ENCODE measurements at regions of chr12 and their contacts with region 1.

Region 1: DNA sequence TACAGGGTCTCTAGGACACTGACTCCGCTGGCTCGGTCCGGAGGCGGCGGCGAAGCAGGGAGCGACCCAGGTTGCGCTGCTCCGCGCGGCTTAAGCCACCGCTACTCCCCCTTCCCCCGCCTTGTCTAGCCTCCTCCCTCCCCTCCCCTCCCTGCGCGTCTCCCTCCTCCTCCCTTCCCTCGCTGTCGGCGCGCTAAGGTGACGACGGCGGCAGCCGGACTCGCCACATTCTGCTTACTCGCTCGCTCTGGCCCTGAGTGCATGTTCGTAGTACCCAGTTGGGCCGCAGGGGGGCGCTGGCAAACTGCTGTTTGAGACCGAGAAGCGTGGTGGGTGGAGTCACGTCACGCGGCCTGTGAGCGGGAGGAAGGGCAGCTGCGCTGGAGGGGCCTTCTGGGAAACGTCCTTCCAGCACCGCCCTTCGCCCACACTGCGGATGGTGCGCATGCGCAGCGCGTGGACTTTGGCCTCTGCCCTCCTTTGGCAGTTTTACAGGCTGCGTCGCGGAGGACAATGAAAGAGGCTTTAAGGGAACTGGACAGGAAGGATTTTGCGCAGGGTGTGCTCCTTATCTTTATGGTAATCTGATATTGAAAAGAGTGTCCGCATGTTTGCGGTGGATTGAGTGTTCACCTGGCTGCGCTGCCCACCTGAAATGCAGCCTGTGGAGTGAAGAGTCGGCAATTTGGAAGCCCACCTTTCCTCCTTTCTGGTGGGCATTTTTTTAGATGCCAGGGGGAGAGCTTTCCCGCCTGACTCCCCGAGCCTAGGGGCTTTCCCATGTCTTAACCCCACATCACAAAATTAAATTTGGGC is at the start of gene SCAF11:
- DNase-seq: peak; percentile 96 to 100 (median 96)
- ATAC-seq: peak; percentile 80
- H3K4me3 ChIP-seq: peak within 1 kb of the TSS; percentile 87
- H3K27ac ChIP-seq: peak within 1 kb of the TSS; percentile 97
- H3K4me1 ChIP-seq: peaks cover 8 to 16% of the 10 kb centered on the region in 2 experiments
- H3K27me3 ChIP-seq: no peaks in the 10 kb centered on the region
- CTCF ChIP-seq: peak; percentile 91 to 98 (median 97)
- EP300 ChIP-seq: peak; percentile 62
- POLR2A ChIP-seq: peak; percentile 89
- RAD21 ChIP-seq: peak; percentile 87 to 94
- polyA plus RNA-seq, gene SCAF11: 30.4 to 35.7 TPM

Region 2: GRCh38 chr12:45728630-45729232 is 261.9 kb before region 1 on chr12:
- CTCF ChIA-PET with region 1: no interaction called
- POLR2A ChIA-PET with region 1: no interaction called
- in situ Hi-C with region 1: no loop called
- intact Hi-C with region 1: loop called (anchors 2 kb)
- DNase-seq: peak; percentile 72 to 97 (median 80)
- ATAC-seq: peak; percentile 73
- H3K4me3 ChIP-seq: peak overlapping the region; percentile 71
- H3K27ac ChIP-seq: peak overlapping the region; percentile 95
- H3K4me1 ChIP-seq: peaks cover 4 to 6% of the 10 kb centered on the region in 2 experiments; a peak in 3 of 5 replicates
- H3K27me3 ChIP-seq: no peaks in the 10 kb centered on the region
- CTCF ChIP-seq: peak; percentile 89 to 98 (median 97)
- EP300 ChIP-seq: peak; percentile 72
- POLR2A ChIP-seq: peak; percentile 95
- RAD21 ChIP-seq: peak; percentile 43 to 61

Region 3: GRCh38 chr12:45974171-45974719 is 16.4 kb before region 1 on chr12:
- CTCF ChIA-PET with region 1: no interaction called
- POLR2A ChIA-PET with region 1: interaction called, 10 read pairs
- in situ Hi-C with region 1: no loop called
- intact Hi-C with region 1: no loop called
- DNase-seq: no peak
- ATAC-seq: no peak; the same call in 2 of the 3 replicates
- H3K4me3 ChIP-seq: no peak overlapping the region
- H3K27ac ChIP-seq: no peak overlapping the region
- H3K4me1 ChIP-seq: peaks cover 5 to 13% of the 10 kb centered on the region in 2 experiments; a peak in 4 of 5 replicates
- H3K27me3 ChIP-seq: no peaks in the 10 kb centered on the region
- CTCF ChIP-seq: no peak
- EP300 ChIP-seq: no peak
- POLR2A ChIP-seq: no peak
- RAD21 ChIP-seq: no peak

Region 4: DNA sequence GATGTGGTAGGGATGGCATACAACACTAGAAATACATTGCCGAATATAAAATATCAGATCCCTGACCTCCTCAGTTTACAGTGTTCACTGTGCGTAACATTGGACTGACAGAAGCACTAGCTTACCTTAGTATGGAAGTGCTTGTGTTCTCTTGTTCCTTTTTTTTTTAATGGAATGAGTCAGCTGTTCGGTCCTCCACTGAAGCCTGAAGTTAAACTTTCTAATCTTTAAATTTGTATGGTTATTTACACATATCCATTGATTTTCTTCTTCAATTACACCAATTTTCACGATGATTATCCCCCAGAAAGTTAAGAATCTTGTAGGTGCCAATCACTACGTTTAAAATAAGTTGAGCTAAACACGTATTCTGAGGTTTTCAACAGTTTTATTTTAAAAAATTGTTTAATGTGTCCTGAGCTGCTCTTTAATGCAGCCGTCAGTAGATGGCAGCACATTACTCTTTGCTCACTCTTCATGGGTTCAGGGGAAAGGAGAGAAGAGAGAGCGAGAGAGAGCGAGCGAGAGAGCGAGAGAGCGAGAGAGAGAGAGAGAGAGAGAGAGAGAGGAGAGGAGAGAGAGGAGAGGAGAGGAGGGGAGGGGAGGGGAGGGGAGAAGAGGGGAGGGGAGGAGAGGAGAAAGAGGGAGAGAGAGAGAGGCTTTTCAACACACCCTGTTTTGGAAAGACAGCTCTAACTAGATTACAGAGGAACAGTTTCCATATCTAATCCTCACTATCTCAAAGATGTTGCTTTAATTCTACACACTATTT is 134.4 kb after region 1 on chr12:
- CTCF ChIA-PET with region 1: no interaction called
- POLR2A ChIA-PET with region 1: interaction called, 3 read pairs
- in situ Hi-C with region 1: no loop called
- intact Hi-C with region 1: loop called (anchors 10 kb)
- DNase-seq: peak; percentile 35 to 78 (median 50)
- ATAC-seq: peak; percentile 95
- H3K4me3 ChIP-seq: no peak overlapping the region
- H3K27ac ChIP-seq: no peak overlapping the region
- H3K4me1 ChIP-seq: peaks cover 0 to 10% of the 10 kb centered on the region in 2 experiments; a peak in 3 of 5 replicates
- H3K27me3 ChIP-seq: no peaks in the 10 kb centered on the region; a peak in 1 of 5 replicates
- CTCF ChIP-seq: peak; percentile 60 to 83 (median 65)
- EP300 ChIP-seq: no peak
- POLR2A ChIP-seq: no peak
- RAD21 ChIP-seq: peak; percentile 76 to 83

Region 5: DNA sequence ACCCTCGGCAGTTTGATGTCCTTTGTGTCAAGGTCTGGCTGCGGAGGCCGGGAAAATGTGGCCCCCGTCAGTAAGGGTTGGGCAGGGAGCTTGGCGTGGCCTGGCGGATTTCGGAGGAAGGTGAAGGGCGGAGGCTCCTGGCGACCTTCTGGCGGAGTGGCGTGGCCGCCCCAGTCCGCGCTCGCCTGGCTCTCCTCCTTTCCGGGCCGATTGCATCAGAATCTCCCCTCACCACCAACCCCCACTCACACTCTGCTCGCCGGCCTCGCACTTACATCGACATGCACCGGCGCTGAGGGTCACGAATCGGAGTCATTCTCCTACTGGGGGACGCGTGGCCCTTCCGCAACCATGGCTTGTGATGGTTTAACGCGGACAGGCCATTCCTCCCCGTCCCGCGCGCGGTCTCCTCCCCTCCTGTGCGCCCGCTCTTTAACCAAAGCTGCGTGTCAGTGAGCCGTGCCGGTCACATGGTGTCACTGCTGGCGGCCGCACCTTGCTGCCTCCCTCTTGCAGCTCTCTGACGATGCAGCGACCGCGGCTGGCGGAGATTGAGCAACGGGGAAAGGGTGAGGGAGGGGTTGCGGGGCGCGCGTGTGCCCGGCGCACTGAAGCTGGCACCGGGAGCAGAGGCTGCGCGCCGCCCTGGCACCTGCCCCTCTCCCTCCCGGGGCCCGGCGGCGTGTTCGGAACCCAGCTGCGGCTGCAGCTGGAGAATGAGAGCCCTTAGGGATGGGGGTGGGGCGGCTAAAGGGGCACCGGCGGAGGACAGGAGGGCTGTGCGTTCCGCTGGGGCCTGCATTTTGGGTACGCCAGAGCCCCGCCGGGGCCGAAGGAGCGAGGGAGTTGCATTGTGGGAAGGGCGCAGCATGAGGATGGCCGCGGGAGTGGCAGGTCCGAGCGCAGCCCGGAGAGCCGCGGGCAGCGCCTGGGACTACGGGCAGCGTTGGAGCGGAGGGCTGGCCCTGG is 278.2 kb after region 1 on chr12 and contains the start of gene SLC38A1:
- CTCF ChIA-PET with region 1: no interaction called
- POLR2A ChIA-PET with region 1: no interaction called
- in situ Hi-C with region 1: no loop called
- intact Hi-C with region 1: loop called (anchors 5 kb)
- DNase-seq: peak; percentile 78 to 88 (median 80)
- ATAC-seq: peak; percentile 87
- H3K4me3 ChIP-seq: peak within 1 kb of the TSS; percentile 83
- H3K27ac ChIP-seq: peak within 1 kb of the TSS; percentile 96
- H3K4me1 ChIP-seq: peaks cover 19 to 33% of the 10 kb centered on the region in 2 experiments; a peak in 4 of 5 replicates
- H3K27me3 ChIP-seq: no peaks in the 10 kb centered on the region
- CTCF ChIP-seq: 0 out of 6 replicates have a peak, but pooled peaks of 2 of the 3 experiments have one; percentile 12 to 14
- EP300 ChIP-seq: peak; percentile 56
- POLR2A ChIP-seq: peak; percentile 88
- RAD21 ChIP-seq: peak in 1 of 2 experiments; percentile 29
- polyA plus RNA-seq, gene SLC38A1: 51.9 to 75.0 TPM

Region 6: GRCh38 chr12:46372544-46373110 is 382.0 kb after region 1 on chr12 and contains the start of gene SLC38A2:
- CTCF ChIA-PET with region 1: no interaction called
- POLR2A ChIA-PET with region 1: no interaction called
- in situ Hi-C with region 1: no loop called
- intact Hi-C with region 1: loop called (anchors 5 kb)
- DNase-seq: peak; percentile 94 to 97 (median 96)
- ATAC-seq: peak; percentile 90
- H3K4me3 ChIP-seq: peak within 1 kb of the TSS; percentile 74
- H3K27ac ChIP-seq: peak within 1 kb of the TSS; percentile 88
- H3K4me1 ChIP-seq: peaks cover 16 to 45% of the 10 kb centered on the region in 2 experiments
- H3K27me3 ChIP-seq: no peaks in the 10 kb centered on the region
- CTCF ChIP-seq: 0 out of 6 replicates have a peak, but pooled peaks of 1 of the 3 experiments have one; percentile 0
- EP300 ChIP-seq: no peak
- POLR2A ChIP-seq: peak; percentile 99
- RAD21 ChIP-seq: peak in 1 of 2 experiments; percentile 6; a peak in 1 of 4 replicates
- polyA plus RNA-seq, gene SLC38A2: 98.7 to 132 TPM

Region 7: DNA sequence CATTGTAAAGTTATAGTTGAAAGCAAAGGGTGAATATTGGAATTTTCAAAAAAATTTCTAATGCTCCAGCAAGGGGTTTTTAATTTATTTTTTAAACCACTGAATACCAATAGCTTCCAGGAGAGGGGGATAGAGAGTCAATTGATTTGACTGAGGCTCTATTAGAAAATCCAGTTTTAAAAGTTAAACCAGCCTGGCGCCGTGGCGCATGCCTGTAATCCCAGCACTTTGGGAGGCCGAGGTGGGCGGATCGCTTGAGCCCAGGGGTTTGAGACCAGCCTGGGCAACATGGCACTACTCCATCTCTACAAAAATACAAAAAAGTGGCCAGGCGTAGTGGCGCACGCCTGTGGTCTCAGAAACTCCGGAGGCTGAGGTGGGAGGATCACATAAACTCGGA is 685.1 kb after region 1 on chr12:
- CTCF ChIA-PET with region 1: no interaction called
- POLR2A ChIA-PET with region 1: no interaction called
- in situ Hi-C with region 1: no loop called
- intact Hi-C with region 1: loop called (anchors 5 kb)
- DNase-seq: peak in 3 of 4 experiments; percentile 17 to 46 (median 26)
- ATAC-seq: peak; percentile 59
- H3K4me3 ChIP-seq: no peak overlapping the region
- H3K27ac ChIP-seq: no peak overlapping the region
- H3K4me1 ChIP-seq: no peaks in the 10 kb centered on the region; a peak in 1 of 5 replicates
- H3K27me3 ChIP-seq: no peaks in the 10 kb centered on the region
- CTCF ChIP-seq: peak; percentile 36 to 60 (median 45); a peak in 4 of 6 replicates
- EP300 ChIP-seq: no peak
- POLR2A ChIP-seq: no peak
- RAD21 ChIP-seq: peak; percentile 32 to 48

Measured in K562 (cell line).